ENCODE measurements at regions of chr11 and their contacts with region 1.

Region 1: GRCh38 chr11:4072668-4073285 is 21.8 kb upstream of the RRM1 start:
- DNase-seq: peak in 29 of 35 experiments; percentile 22 to 87 (median 40)
- ATAC-seq: peak; percentile 79 to 83 (median 80)
- H3K4me3 ChIP-seq: no peak overlapping the region
- H3K4me3 Mint-ChIP-seq: no peak overlapping the region
- H3K27ac ChIP-seq: peak overlapping the region; percentile 44
- H3K27ac Mint-ChIP-seq: peak overlapping the region; percentile 80 to 90
- H3K4me1 ChIP-seq: peaks cover 17 to 20% of the 10 kb centered on the region in 2 experiments
- H3K4me1 Mint-ChIP-seq: peaks cover 55 to 67% (median 56%) of the 10 kb centered on the region in 3 donors
- H3K27me3 ChIP-seq: no peaks in the 10 kb centered on the region
- H3K27me3 Mint-ChIP-seq: no peaks in the 10 kb centered on the region

Region 2: DNA sequence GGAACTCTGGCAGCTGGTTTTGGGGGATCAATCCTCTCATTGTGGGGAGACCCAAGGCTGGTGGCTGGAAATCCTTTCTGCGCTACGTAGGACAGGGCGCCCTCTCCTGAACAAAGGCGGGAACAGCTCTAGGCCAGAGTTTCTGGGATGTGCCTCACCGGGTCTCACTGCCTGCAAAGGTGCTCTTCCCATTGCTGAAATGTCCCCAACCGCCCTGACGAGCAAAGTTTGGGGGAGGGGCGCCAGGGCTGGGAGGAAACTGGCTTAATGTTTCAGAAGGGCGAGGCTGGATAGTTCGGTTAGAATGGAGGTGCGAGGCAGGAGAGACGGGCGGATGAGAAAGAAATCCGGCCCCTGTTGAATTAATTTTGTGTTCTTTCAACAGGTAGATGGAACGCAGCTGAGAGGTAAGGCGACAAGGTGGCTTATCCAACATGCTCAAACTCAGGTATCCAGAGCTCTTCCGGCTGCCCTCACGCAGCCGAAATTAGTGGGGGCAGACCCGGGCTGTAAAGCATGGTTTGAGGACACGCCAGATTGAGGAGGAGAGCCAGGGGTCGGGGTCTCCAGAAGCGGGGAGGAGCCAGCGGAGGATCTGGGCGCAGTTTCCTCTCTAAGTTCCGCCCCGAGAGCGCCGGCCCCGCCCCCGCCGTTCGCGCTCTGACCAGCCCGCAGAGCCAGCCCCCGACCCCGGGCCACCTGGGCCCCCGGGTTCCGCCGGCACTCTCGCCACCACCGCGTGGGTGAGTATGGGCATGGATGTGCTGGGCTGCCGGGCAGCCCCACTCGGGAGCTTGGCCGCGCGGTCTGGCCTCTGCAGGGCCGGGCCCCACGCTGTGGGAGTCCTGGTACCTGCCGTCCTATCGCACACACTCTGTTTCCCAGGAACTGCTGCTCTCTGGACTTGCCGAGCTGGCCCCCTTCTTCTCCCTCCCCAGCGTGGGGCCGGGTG is 264.6 kb before region 1 on chr11 and contains the start of gene PGAP2:
- CTCF ChIA-PET with region 1: interaction called, 4 to 16 read pairs
- POLR2A ChIA-PET with region 1: interaction called in 1 of 2 experiments, 7 read pairs
- DNase-seq: peak; percentile 20 to 74 (median 42)
- ATAC-seq: peak; percentile 76 to 81 (median 77)
- H3K4me3 ChIP-seq: peak within 1 kb of the TSS; percentile 86 to 89
- H3K4me3 Mint-ChIP-seq: peak within 1 kb of the TSS; percentile 94 to 99 (median 98)
- H3K27ac ChIP-seq: peak within 1 kb of the TSS; percentile 56
- H3K27ac Mint-ChIP-seq: peak within 1 kb of the TSS; percentile 91 to 93
- H3K4me1 ChIP-seq: peaks cover 0 to 16% of the 10 kb centered on the region in 2 experiments
- H3K4me1 Mint-ChIP-seq: peaks cover 16 to 20% (median 17%) of the 10 kb centered on the region in 3 donors
- H3K27me3 ChIP-seq: no peaks in the 10 kb centered on the region
- H3K27me3 Mint-ChIP-seq: no peaks in the 10 kb centered on the region
- total RNA-seq, gene PGAP2: 22.5 to 28.2 (median 24.6) TPM

Region 3: GRCh38 chr11:3849297-3849874 is 223.4 kb before region 1 on chr11:
- CTCF ChIA-PET with region 1: interaction called, 54 to 182 read pairs
- POLR2A ChIA-PET with region 1: interaction called, 5 to 21 read pairs
- DNase-seq: peak in 16 of 35 experiments; percentile 31 to 82 (median 46)
- ATAC-seq: peak; percentile 49 to 68 (median 64)
- H3K4me3 ChIP-seq: no peak overlapping the region
- H3K4me3 Mint-ChIP-seq: no peak overlapping the region
- H3K27ac ChIP-seq: no peak overlapping the region
- H3K27ac Mint-ChIP-seq: peak overlapping the region; percentile 19 to 23
- H3K4me1 ChIP-seq: peaks cover 25 to 37% of the 10 kb centered on the region in 2 experiments
- H3K4me1 Mint-ChIP-seq: peaks cover 41 to 58% (median 42%) of the 10 kb centered on the region in 3 donors
- H3K27me3 ChIP-seq: no peaks in the 10 kb centered on the region
- H3K27me3 Mint-ChIP-seq: no peaks in the 10 kb centered on the region

Region 4: GRCh38 chr11:3873712-3874349 is 198.9 kb before region 1 on chr11:
- CTCF ChIA-PET with region 1: interaction called, 3 to 5 read pairs
- POLR2A ChIA-PET with region 1: interaction called, 4 to 12 read pairs
- DNase-seq: no peak
- ATAC-seq: no peak
- H3K4me3 ChIP-seq: no peak overlapping the region
- H3K4me3 Mint-ChIP-seq: no peak overlapping the region
- H3K27ac ChIP-seq: no peak overlapping the region
- H3K27ac Mint-ChIP-seq: peak overlapping the region; percentile 55 to 71
- H3K4me1 ChIP-seq: peaks cover 26 to 28% of the 10 kb centered on the region in 2 experiments
- H3K4me1 Mint-ChIP-seq: peaks cover 90 to 92% (median 91%) of the 10 kb centered on the region in 3 donors
- H3K27me3 ChIP-seq: no peaks in the 10 kb centered on the region
- H3K27me3 Mint-ChIP-seq: no peaks in the 10 kb centered on the region

Region 5: GRCh38 chr11:3942160-3942955 is 130.4 kb before region 1 on chr11:
- CTCF ChIA-PET with region 1: interaction called, 4 to 16 read pairs
- POLR2A ChIA-PET with region 1: interaction called, 3 read pairs
- DNase-seq: peak in 27 of 35 experiments; percentile 3 to 66 (median 24)
- ATAC-seq: peak; percentile 53 to 64 (median 56)
- H3K4me3 ChIP-seq: no peak overlapping the region
- H3K4me3 Mint-ChIP-seq: peak overlapping the region; percentile 4 to 44 (median 43)
- H3K27ac ChIP-seq: peak overlapping the region; percentile 77
- H3K27ac Mint-ChIP-seq: peak overlapping the region; percentile 93
- H3K4me1 ChIP-seq: peaks cover 55 to 61% of the 10 kb centered on the region in 2 experiments
- H3K4me1 Mint-ChIP-seq: peaks cover 87 to 92% (median 91%) of the 10 kb centered on the region in 3 donors
- H3K27me3 ChIP-seq: no peaks in the 10 kb centered on the region
- H3K27me3 Mint-ChIP-seq: no peaks in the 10 kb centered on the region

Region 6: DNA sequence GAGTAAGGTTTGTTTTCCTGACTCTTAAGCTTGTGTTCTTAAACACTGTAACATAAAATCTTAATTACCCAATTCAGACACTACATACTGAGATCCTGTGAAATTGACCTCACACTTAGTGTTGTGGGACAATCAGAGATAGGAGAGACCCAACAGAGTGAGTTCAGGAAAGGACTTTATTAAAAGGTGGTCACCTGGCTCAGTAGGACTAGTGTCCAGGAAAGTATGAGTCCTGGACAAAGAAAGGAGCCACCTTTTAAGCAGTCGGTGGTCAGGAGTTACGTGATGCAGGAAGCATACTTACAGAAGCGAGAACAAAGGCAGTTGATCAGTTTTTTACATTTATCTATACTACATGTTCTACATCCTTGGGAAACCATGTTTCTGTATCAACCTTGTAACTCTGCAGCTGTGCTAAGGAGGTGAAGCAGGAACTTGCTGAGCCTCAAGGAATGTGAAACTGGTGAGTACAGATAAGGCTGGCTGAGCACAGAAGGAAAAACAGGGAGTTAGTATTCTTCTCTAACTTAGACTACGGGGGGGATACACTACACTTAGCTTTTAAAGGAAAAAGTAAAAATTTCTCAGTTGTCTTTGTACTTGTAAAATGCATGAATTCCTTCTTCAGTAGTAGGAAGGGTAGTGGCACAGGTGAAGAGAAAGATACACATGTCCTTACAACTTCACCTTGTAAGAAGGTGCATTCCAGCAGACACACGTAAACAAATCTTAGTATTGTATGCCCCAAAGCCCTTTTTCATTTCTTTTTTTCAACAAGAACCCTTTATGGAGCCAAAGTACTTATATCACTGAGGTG is 586.1 kb after region 1 on chr11:
- CTCF ChIA-PET with region 1: no interaction called
- POLR2A ChIA-PET with region 1: no interaction called
- DNase-seq: no peak
- ATAC-seq: no peak
- H3K4me3 ChIP-seq: no peak overlapping the region
- H3K4me3 Mint-ChIP-seq: no peak overlapping the region
- H3K27ac ChIP-seq: no peak overlapping the region
- H3K27ac Mint-ChIP-seq: no peak overlapping the region
- H3K4me1 ChIP-seq: no peaks in the 10 kb centered on the region
- H3K4me1 Mint-ChIP-seq: peaks cover 0 to 3% (median 3%) of the 10 kb centered on the region in 3 donors
- H3K27me3 ChIP-seq: peaks cover 0 to 15% of the 10 kb centered on the region in 2 experiments
- H3K27me3 Mint-ChIP-seq: peaks cover 19 to 20% of the 10 kb centered on the region in 2 donors